Activated B cell treated with CpG ODN at 0.5 μM for 24 hours (primary cell): ENCODE measurements at regions of chr14 and their contacts with region 1.

Region 1: DNA sequence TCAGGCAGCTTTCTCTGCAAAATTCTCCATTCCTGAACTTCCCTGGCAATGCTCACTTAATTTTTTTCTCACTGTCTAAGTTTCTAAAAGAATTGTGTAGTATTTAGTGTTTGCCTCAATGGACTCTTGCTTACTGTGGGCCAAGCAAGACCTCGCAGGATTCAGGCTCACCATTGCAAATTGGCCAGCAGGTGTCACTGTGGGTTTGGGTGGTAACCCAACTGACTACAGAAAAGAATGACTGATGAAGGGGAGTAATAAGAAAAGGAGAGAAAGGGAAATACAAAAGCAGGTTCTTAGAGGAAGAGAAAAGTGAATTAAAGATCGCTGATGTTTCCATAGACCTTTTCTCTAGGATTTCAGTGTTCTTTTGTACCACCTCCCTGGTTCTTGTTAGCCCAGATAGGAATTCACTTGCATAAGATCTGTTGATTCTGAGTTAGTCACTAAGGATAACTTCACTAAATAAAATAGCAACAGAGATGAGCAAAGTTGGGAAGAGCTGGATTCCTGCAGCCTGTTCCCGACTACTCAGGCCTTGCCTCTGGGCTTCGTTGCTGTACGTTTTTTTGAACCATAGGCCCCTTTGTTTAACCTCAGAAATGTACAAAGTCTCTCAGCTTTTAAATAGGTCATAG is 386.5 kb upstream of the DDHD1 start:
- DNase-seq: peak; percentile 48
- ATAC-seq: peak; percentile 84
- H3K4me3 Mint-ChIP-seq: no peak overlapping the region
- H3K27ac Mint-ChIP-seq: no peak overlapping the region
- H3K4me1 Mint-ChIP-seq: peaks cover 14% of the 10 kb centered on the region
- H3K27me3 Mint-ChIP-seq: no peaks in the 10 kb centered on the region
- CTCF ChIP-seq: peak; percentile 76

Region 2: GRCh38 chr14:53613404-53614253 is 74.0 kb after region 1 on chr14:
- CTCF ChIA-PET with region 1: interaction called, 20 read pairs
- POLR2A ChIA-PET with region 1: interaction called, 7 read pairs
- intact Hi-C with region 1: loop called (anchors 1 kb)
- DNase-seq: peak; percentile 59
- ATAC-seq: peak; percentile 93
- H3K4me3 Mint-ChIP-seq: peak overlapping the region; percentile 79
- H3K27ac Mint-ChIP-seq: peak overlapping the region; percentile 100
- H3K4me1 Mint-ChIP-seq: peaks cover 53% of the 10 kb centered on the region
- H3K27me3 Mint-ChIP-seq: no peaks in the 10 kb centered on the region
- CTCF ChIP-seq: no peak

Region 3: GRCh38 chr14:53778263-53778662 is 238.7 kb after region 1 on chr14:
- CTCF ChIA-PET with region 1: no interaction called
- POLR2A ChIA-PET with region 1: no interaction called
- intact Hi-C with region 1: loop called (anchors 5 kb)
- DNase-seq: no peak
- ATAC-seq: no peak
- H3K4me3 Mint-ChIP-seq: no peak overlapping the region
- H3K27ac Mint-ChIP-seq: no peak overlapping the region
- H3K4me1 Mint-ChIP-seq: no peaks in the 10 kb centered on the region
- H3K27me3 Mint-ChIP-seq: peaks cover 8% of the 10 kb centered on the region
- CTCF ChIP-seq: no peak

Region 4: DNA sequence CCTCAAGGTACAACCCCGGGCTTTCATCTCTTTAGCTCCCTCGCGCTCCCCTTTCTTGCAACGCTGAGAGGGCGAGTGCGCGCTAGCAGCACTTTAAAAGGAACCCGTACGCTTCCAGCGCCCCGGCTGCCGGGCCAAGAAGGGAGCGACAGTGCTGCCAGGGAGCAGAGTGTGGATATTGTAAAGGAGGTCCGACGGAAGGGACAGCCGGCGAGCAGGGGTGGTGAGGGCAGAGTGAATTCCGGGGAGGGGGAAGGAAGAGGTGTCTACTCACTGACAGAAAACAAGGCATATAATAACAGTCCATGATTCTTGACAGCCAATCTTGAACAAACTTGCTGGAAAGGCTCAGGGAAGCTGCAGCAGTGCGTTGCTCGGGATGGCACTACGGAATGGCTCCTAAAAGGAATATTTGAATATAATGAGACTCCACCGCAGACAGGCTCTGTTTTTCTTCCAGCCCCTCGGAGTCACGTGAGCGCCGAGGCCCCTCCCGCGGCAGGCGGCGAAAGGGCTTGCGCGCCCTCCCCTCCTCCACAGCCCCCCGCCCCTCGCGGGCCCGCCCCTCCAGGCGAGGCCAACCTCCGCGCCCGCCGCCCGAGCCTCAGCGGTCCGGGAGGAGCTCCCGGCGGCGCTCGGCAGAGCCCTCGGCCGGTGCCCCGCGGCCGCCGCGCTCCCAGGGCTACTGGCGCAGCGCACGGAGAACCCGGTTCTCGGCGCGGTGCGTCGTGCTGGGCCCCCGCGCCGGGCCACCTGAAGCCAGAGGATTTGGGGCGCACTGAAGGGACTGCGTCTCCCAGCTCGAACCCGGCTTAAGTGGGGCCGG is 413.6 kb after region 1 on chr14:
- CTCF ChIA-PET with region 1: no interaction called
- POLR2A ChIA-PET with region 1: no interaction called
- intact Hi-C with region 1: loop called (anchors 5 kb)
- DNase-seq: no peak
- ATAC-seq: peak; percentile 45
- H3K4me3 Mint-ChIP-seq: peak overlapping the region; percentile 81
- H3K27ac Mint-ChIP-seq: no peak overlapping the region
- H3K4me1 Mint-ChIP-seq: peaks cover 34% of the 10 kb centered on the region
- H3K27me3 Mint-ChIP-seq: peaks cover 85% of the 10 kb centered on the region
- CTCF ChIP-seq: no peak

Region 5: DNA sequence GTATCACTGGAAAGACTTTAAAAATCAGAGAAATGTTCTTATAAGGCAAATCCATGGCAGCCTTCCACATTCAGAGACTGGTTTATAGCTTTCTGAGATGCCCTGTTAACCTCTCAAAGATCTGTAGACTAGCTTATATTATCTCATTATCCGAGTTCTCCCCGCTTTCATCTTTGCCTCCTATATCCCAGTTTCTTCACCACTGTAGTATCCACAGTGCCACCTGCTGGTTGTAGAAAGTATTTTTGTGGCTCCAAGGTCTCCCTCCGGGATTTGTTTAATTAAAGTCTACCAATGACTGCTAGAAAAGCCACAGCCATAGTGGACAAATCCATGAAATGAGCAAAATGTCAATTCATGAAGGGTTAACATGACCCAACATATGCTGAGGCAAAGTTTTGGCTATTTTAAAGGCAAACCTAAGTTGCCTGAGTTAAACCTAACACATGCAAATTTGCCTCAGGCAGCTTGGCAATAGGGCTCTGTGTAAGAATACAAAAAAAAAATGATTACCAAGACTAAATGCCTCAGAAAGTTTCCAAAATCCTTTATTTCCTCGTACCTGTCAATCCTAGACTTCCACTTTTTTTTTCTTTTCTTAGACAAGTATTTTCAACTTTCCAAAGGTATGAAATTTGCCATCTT is 635.8 kb after region 1 on chr14:
- CTCF ChIA-PET with region 1: interaction called, 21 read pairs
- POLR2A ChIA-PET with region 1: interaction called, 3 read pairs
- intact Hi-C with region 1: loop called (anchors 1 kb)
- DNase-seq: no peak
- ATAC-seq: no peak
- H3K4me3 Mint-ChIP-seq: no peak overlapping the region
- H3K27ac Mint-ChIP-seq: no peak overlapping the region
- H3K4me1 Mint-ChIP-seq: no peaks in the 10 kb centered on the region
- H3K27me3 Mint-ChIP-seq: peaks cover 10% of the 10 kb centered on the region
- CTCF ChIP-seq: peak; percentile 66

Region 6: DNA sequence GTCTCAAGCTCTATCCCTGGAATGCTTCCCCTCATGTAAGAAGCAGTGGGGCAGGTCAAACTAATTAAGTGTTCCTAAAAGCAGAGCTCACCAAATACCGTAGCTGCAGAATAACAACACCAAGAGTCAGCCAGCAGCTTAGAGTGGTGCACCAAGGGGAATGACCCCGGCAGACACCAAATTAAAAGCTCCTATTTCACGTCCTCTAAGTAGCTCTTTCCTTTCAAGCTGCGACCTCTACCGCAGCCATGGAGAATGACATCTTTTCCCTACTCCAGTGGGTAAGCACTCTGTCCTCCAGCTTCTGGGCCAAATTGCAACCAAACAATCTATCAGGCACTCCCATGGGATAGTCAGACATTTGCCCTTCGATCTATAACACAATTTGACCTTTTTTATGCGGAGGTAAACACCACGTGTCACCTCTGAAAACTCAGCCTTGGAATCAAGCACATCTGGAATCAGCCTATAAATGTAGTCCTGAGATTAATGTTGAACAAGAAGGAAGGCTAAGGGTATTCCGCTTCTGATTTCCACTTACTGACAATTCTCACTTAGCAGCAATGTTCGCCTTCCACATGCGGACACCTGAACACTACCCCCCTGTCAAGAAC is 789.6 kb after region 1 on chr14:
- CTCF ChIA-PET with region 1: interaction called, 13 read pairs
- POLR2A ChIA-PET with region 1: no interaction called
- intact Hi-C with region 1: loop called (anchors 1 kb)
- DNase-seq: no peak
- ATAC-seq: peak; percentile 52
- H3K4me3 Mint-ChIP-seq: no peak overlapping the region
- H3K27ac Mint-ChIP-seq: no peak overlapping the region
- H3K4me1 Mint-ChIP-seq: no peaks in the 10 kb centered on the region
- H3K27me3 Mint-ChIP-seq: peaks cover 15% of the 10 kb centered on the region
- CTCF ChIP-seq: no peak

Region 7: DNA sequence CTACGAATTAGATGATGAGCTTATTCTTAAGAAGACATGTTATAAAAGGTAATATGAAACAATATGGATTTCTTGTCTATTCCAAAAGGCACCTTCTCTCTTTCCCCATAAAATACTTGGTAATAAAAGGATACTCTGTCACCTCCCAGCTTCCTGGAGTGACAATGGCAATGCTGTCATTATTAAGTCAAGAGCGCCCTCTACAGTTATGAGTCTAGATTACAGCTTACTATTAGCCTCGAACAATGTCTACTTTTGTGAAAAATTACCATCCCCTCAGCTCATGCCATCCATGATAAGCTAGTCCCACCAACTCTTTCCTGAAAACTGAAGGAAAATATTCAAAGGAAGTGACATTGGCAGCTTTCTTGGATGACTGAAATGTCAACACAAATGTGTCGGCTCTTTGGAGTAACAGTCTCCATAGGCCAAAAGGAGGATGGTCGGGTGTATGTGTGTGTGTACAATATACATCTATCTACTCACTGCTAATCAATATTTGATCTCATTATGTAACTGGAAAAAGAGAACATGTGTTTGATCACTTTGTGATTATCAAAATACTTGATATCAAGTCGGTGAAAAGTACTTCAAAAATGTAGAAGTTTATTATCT is 808.5 kb after region 1 on chr14:
- CTCF ChIA-PET with region 1: interaction called, 19 read pairs
- POLR2A ChIA-PET with region 1: no interaction called
- intact Hi-C with region 1: loop called (anchors 1 kb)
- DNase-seq: no peak
- ATAC-seq: peak; percentile 21
- H3K4me3 Mint-ChIP-seq: no peak overlapping the region
- H3K27ac Mint-ChIP-seq: no peak overlapping the region
- H3K4me1 Mint-ChIP-seq: peaks cover 5% of the 10 kb centered on the region
- H3K27me3 Mint-ChIP-seq: peaks cover 4% of the 10 kb centered on the region
- CTCF ChIP-seq: no peak